Lower leg skin (tissue), 4 donors: ENCODE measurements at regions of chr10 and their contacts with region 1.

Region 1: GRCh38 chr10:30783939-30784500 is 154.5 kb upstream of the LYZL2 start:
- DNase-seq: peak; percentile 75 to 96
- H3K4me3 ChIP-seq: no peak overlapping the region
- CTCF ChIP-seq: no peak
- POLR2A ChIP-seq: no peak

Region 2: GRCh38 chr10:30625080-30625479 is 158.9 kb before region 1 on chr10:
- intact Hi-C with region 1: no loop called
- DNase-seq: no peak
- H3K4me3 ChIP-seq: no peak overlapping the region
- CTCF ChIP-seq: no peak
- POLR2A ChIP-seq: no peak

Region 3: GRCh38 chr10:31808258-31809218 is 1024.5 kb after region 1 on chr10:
- intact Hi-C with region 1: loop called (anchors 10 kb)
- DNase-seq: peak in 1 of 2 donors; percentile 22
- H3K4me3 ChIP-seq: no peak overlapping the region
- CTCF ChIP-seq: peak in 1 of 3 donors; percentile 44
- POLR2A ChIP-seq: no peak